ENCODE measurements at regions of chr7 and their contacts with region 1.

Region 1: DNA sequence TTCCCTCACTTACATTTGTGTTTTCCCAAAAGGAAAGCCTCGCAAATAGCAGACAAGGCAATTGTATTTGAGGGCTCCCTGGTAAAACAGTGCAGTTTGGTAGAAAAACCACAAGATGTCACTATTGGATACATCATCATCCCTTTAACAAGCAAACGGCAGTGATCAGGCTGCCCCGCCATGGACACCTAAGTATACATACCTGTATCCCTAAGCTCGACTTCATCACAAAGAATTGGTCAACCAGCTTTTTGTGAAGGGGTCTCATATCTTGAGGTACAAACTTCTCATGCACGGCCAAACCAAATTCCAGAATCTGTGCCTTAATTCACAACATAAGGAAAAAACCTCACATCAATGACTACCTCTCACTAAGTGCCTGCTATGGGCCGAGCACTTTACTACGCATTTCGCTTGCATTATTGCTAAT is 179.5 kb upstream of the IMMP2L start:
- DNase-seq: peak; percentile 51
- H3K4me3 ChIP-seq: no peak overlapping the region
- H3K27ac ChIP-seq: no peak overlapping the region
- H3K4me1 ChIP-seq: no peaks in the 10 kb centered on the region
- H3K27me3 ChIP-seq: no peaks in the 10 kb centered on the region
- CTCF ChIP-seq: peak; percentile 60 to 67 (median 63)
- EP300 ChIP-seq: no peak
- POLR2A ChIP-seq: no peak

Region 2: GRCh38 chr7:111098011-111098925 is 643.6 kb before region 1 on chr7:
- in situ Hi-C with region 1: loop called in 2 of 4 experiments (anchors 25 kb)
- intact Hi-C with region 1: no loop called
- DNase-seq: peak; percentile 10
- H3K4me3 ChIP-seq: no peak overlapping the region
- H3K27ac ChIP-seq: no peak overlapping the region
- H3K4me1 ChIP-seq: peaks cover 0 to 6% (median 0%) of the 10 kb centered on the region in 4 donors
- H3K27me3 ChIP-seq: no peaks in the 10 kb centered on the region
- CTCF ChIP-seq: peak in 4 of 5 experiments; percentile 33 to 47 (median 39)
- EP300 ChIP-seq: no peak
- POLR2A ChIP-seq: no peak

Region 3: DNA sequence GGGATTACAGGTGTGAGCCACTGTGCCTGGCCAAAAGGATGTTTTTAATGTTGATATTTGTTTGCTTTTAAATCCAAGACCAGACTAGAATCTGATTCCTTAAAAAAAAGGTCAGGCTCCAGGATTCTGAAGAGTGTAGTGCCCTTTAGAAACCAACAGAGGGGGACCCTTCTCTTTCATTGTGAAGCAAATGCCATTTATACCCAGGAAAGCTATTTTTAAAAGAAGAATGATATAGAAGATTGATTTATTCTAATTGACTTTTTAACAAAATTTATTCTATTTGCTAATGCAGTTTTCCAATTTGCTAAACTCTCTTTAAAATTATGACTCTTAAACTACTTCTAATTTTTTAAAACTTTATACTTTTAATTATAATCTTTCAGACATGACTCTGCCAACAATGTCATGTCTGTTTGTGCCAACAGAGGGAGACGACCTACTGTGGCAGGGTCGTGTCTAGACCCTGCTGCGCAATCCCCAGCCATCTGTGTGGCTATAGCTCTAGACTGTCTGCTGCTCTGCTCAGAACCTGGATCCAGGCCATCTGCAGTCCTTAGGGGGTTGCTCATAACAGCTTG is 21.5 kb after region 1 on chr7:
- in situ Hi-C with region 1: no loop called
- intact Hi-C with region 1: no loop called
- DNase-seq: no peak
- H3K4me3 ChIP-seq: no peak overlapping the region
- H3K27ac ChIP-seq: no peak overlapping the region
- H3K4me1 ChIP-seq: peaks cover 0 to 6% (median 0%) of the 10 kb centered on the region in 4 donors
- H3K27me3 ChIP-seq: no peaks in the 10 kb centered on the region
- CTCF ChIP-seq: peak; percentile 40 to 63 (median 58)
- EP300 ChIP-seq: no peak
- POLR2A ChIP-seq: no peak

Region 4: GRCh38 chr7:112322070-112322469 is 580.2 kb after region 1 on chr7:
- in situ Hi-C with region 1: no loop called
- intact Hi-C with region 1: no loop called
- DNase-seq: no peak
- H3K4me3 ChIP-seq: no peak overlapping the region
- H3K27ac ChIP-seq: no peak overlapping the region
- H3K4me1 ChIP-seq: no peaks in the 10 kb centered on the region
- H3K27me3 ChIP-seq: no peaks in the 10 kb centered on the region
- CTCF ChIP-seq: no peak
- EP300 ChIP-seq: no peak
- POLR2A ChIP-seq: no peak

Region 5: DNA sequence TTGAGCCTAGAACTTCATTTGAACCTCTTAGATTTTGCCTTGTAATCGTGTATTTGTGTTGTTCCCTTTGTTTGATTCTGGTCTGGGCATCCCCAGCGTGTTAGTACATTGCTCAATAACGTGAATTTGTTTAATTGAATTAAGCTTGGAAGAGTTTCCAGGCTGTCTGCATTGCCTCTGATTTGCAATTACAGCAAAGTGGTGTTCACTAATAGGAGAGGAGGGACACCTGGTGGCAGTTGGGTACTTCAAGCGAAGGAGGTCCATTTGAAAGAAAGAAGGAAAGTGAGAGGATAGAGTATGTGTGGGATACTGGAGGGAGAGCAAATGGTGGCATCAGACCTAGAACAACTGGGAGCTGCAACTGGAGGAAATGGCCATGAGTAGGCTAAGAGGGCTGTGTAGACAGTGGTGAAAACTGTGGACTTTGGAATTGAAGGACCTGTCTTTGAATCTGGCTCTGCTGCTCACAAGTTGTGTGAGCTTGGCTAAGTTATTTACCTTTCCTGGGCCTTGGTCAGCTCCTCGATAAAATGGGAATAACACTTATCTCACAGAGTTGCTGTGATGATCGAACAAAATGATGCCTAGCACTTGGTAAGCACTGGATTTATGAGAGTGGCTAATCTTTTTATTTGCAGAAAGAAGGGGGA is 754.1 kb after region 1 on chr7:
- in situ Hi-C with region 1: loop called in 2 of 4 experiments (anchors 10 kb)
- intact Hi-C with region 1: no loop called
- DNase-seq: peak; percentile 61
- H3K4me3 ChIP-seq: no peak overlapping the region
- H3K27ac ChIP-seq: peak overlapping the region in 1 of 4 donors; percentile 36
- H3K4me1 ChIP-seq: peaks cover 0 to 4% (median 0%) of the 10 kb centered on the region in 4 donors
- H3K27me3 ChIP-seq: no peaks in the 10 kb centered on the region
- CTCF ChIP-seq: peak; percentile 53 to 62 (median 58)
- EP300 ChIP-seq: no peak
- POLR2A ChIP-seq: no peak

Region 6: GRCh38 chr7:113421696-113422330 is 1680.0 kb after region 1 on chr7:
- in situ Hi-C with region 1: loop called in 1 of 4 experiments (anchors 25 kb)
- intact Hi-C with region 1: no loop called
- DNase-seq: peak; percentile 77
- H3K4me3 ChIP-seq: no peak overlapping the region
- H3K27ac ChIP-seq: no peak overlapping the region
- H3K4me1 ChIP-seq: peaks cover 0 to 3% (median 0%) of the 10 kb centered on the region in 4 donors
- H3K27me3 ChIP-seq: no peaks in the 10 kb centered on the region
- CTCF ChIP-seq: peak; percentile 71 to 80 (median 77)
- EP300 ChIP-seq: no peak
- POLR2A ChIP-seq: no peak